Colonic mucosa (tissue), 4 donors: ENCODE measurements at regions of chr15 and their contacts with region 1.

Region 1: GRCh38 chr15:99102332-99103235 is 2.3 kb upstream of the SYNM start:
- DNase-seq: no peak
- H3K4me3 ChIP-seq: no peak overlapping the region
- H3K27ac ChIP-seq: no peak overlapping the region
- H3K4me1 ChIP-seq: no peaks in the 10 kb centered on the region
- H3K27me3 ChIP-seq: peaks cover 17% of the 10 kb centered on the region
- CTCF ChIP-seq: no peak

Region 2: GRCh38 chr15:99213187-99213811 is 110.7 kb after region 1 on chr15:
- intact Hi-C with region 1: loop called (anchors 2 kb)
- DNase-seq: peak; percentile 82
- H3K4me3 ChIP-seq: no peak overlapping the region
- H3K27ac ChIP-seq: no peak overlapping the region
- H3K4me1 ChIP-seq: no peaks in the 10 kb centered on the region
- H3K27me3 ChIP-seq: no peaks in the 10 kb centered on the region
- CTCF ChIP-seq: peak; percentile 76